MCF 10A (cell line): ENCODE measurements at regions of chrX and their contacts with region 1.

Region 1: DNA sequence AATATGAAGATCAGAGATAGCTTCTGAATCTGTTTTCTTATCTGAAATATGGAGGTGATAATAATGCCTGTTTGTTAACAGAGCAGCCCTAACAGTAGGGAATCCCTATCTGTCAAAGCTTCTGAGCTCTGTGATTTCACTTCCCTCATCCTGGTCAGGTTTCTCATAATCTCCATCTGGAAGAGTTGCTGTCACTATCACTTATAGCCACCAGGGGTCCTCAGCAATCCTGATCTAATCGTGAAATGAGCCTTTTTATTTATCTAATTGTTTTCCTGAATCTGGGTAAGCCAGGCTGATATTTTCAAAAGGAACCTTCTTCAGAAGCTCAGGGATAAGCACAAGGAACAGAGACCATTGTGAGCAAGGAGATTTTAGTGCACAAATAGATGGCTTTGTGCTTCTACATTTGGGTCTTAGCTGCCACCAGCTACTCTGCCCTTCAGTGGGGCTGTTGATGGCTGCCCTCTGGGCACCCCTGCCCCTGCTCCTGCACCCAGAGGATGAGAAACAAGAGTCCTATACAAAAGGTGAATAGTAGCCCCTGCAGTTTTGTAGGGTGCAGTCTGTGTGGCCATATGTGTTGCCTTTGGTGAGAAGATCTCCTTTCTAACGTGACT is 196.4 kb upstream of the RADX start:
- DNase-seq: peak; percentile 60
- H3K4me3 Mint-ChIP-seq: no peak overlapping the region
- H3K27ac Mint-ChIP-seq: no peak overlapping the region
- H3K4me1 Mint-ChIP-seq: no peaks in the 10 kb centered on the region
- H3K27me3 Mint-ChIP-seq: peaks cover 59% of the 10 kb centered on the region
- CTCF ChIP-seq: peak; percentile 60

Region 2: GRCh38 chrX:106118786-106119185 is 296.6 kb before region 1 on chrX:
- CTCF ChIA-PET with region 1: no interaction called
- POLR2A ChIA-PET with region 1: no interaction called
- intact Hi-C with region 1: no loop called
- DNase-seq: no peak
- H3K4me3 Mint-ChIP-seq: no peak overlapping the region
- H3K27ac Mint-ChIP-seq: no peak overlapping the region
- H3K4me1 Mint-ChIP-seq: no peaks in the 10 kb centered on the region
- H3K27me3 Mint-ChIP-seq: peaks cover 49% of the 10 kb centered on the region
- CTCF ChIP-seq: no peak

Region 3: GRCh38 chrX:106404512-106404911 is 10.9 kb before region 1 on chrX:
- CTCF ChIA-PET with region 1: interaction called, 22 read pairs
- POLR2A ChIA-PET with region 1: interaction called, 3 read pairs
- intact Hi-C with region 1: no loop called
- DNase-seq: peak; percentile 40
- H3K4me3 Mint-ChIP-seq: no peak overlapping the region
- H3K27ac Mint-ChIP-seq: no peak overlapping the region
- H3K4me1 Mint-ChIP-seq: no peaks in the 10 kb centered on the region
- H3K27me3 Mint-ChIP-seq: peaks cover 55% of the 10 kb centered on the region
- CTCF ChIP-seq: peak; percentile 39

Region 4: GRCh38 chrX:106457802-106458201 is 42.4 kb after region 1 on chrX:
- CTCF ChIA-PET with region 1: no interaction called
- POLR2A ChIA-PET with region 1: no interaction called
- intact Hi-C with region 1: no loop called
- DNase-seq: no peak
- H3K4me3 Mint-ChIP-seq: no peak overlapping the region
- H3K27ac Mint-ChIP-seq: no peak overlapping the region
- H3K4me1 Mint-ChIP-seq: no peaks in the 10 kb centered on the region
- H3K27me3 Mint-ChIP-seq: peaks cover 54% of the 10 kb centered on the region
- CTCF ChIP-seq: no peak

Region 5: DNA sequence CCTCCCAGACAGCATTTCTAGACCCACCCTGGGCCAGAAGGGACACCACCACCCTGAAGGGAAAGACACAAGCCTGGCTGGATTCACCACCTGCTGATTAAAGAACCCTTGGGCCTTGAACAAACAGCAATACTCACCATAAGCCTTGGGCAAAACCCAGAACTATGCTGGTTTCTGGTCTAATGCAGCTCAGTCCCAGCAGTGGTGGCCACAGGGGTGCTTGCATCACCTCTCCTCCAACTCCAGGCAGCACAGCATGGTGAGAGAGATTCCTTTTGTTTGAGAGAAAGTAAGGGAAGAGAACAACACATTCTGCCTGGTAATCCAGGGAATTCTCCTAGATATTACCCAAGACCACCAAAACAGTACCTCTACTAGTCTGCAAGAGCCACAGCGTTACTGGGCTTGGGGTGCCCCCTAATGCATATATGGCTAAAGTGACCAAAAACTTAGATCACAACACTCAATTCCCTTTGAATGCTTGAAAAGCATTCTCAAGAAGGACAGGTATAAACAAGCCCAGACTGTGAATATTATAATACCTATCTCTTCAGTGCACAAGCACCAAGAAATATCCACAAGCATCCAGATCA is 336.8 kb after region 1 on chrX:
- CTCF ChIA-PET with region 1: no interaction called
- POLR2A ChIA-PET with region 1: no interaction called
- intact Hi-C with region 1: loop called (anchors 1 kb)
- DNase-seq: peak; percentile 12
- H3K4me3 Mint-ChIP-seq: no peak overlapping the region
- H3K27ac Mint-ChIP-seq: no peak overlapping the region
- H3K4me1 Mint-ChIP-seq: peaks cover 5% of the 10 kb centered on the region
- H3K27me3 Mint-ChIP-seq: peaks cover 57% of the 10 kb centered on the region
- CTCF ChIP-seq: peak; percentile 27

Region 6: DNA sequence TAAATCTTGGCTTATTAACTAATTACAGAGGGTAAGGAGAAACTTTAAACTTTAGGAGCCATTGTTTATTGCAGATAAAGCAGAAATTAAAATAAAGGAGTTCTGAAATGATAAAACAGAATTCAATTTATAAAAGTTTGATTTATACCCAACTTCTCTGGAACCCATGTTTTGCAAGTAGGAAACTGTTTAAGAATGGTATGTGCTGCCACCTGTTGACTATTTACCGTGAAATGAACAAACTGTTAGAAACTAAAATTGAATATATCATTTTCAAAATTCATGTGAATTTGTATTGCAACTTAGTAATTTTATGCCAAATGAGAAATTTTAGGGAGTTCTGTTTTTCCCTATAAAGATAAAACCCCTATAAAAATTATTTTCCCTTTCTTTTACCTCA is 376.1 kb after region 1 on chrX:
- CTCF ChIA-PET with region 1: interaction called, 3 read pairs
- POLR2A ChIA-PET with region 1: no interaction called
- intact Hi-C with region 1: loop called (anchors 1 kb)
- DNase-seq: peak; percentile 32
- H3K4me3 Mint-ChIP-seq: no peak overlapping the region
- H3K27ac Mint-ChIP-seq: no peak overlapping the region
- H3K4me1 Mint-ChIP-seq: no peaks in the 10 kb centered on the region
- H3K27me3 Mint-ChIP-seq: peaks cover 54% of the 10 kb centered on the region
- CTCF ChIP-seq: peak; percentile 49